Adrenal gland (tissue), 19 donors: ENCODE measurements at regions of chr19 and their contacts with region 1.

Region 1: GRCh38 chr19:49443366-49444099 is 2.2 kb upstream of the SLC17A7 start:
- DNase-seq: peak; percentile 91 to 97 (median 95)
- H3K4me3 ChIP-seq: peak overlapping the region in 3 of 4 donors; percentile 15 to 65 (median 46)
- H3K27ac ChIP-seq: peak overlapping the region in 4 of 5 donors; percentile 5 to 90 (median 48)
- H3K4me1 ChIP-seq: no peaks in the 10 kb centered on the region
- H3K27me3 ChIP-seq: peaks cover 12% of the 10 kb centered on the region
- CTCF ChIP-seq: peak; percentile 69 to 95 (median 78)
- POLR2A ChIP-seq: no peak

Region 2: DNA sequence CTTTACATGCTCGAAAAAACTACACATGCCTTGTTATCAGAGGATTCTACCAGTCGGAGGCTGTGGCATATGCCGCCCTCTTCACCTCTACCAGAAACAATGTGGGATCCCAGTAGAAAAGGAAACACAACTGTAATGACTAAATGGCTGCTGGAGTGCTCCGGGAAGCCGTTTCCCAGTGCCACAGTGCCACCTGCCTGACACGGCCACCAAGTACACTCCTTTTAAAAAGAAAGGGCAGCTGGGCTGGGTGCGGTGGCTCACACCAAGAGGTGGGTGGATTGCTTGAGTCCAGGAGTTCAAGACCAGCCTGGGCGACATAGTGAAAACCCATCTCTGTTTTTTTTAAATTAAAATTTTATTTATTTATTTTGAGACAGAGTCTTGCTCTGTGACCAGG is 218.7 kb before region 1 on chr19:
- intact Hi-C with region 1: loop called in 1 of 2 experiments (anchors 5 kb)
- DNase-seq: peak; percentile 27 to 76 (median 65)
- H3K4me3 ChIP-seq: no peak overlapping the region
- H3K27ac ChIP-seq: no peak overlapping the region
- H3K4me1 ChIP-seq: no peaks in the 10 kb centered on the region
- H3K27me3 ChIP-seq: no peaks in the 10 kb centered on the region
- CTCF ChIP-seq: peak; percentile 25 to 55 (median 42)
- POLR2A ChIP-seq: no peak

Region 3: GRCh38 chr19:49391581-49392399 is 51.7 kb before region 1 on chr19:
- intact Hi-C with region 1: loop called (anchors 2 to 5 kb)
- DNase-seq: peak; percentile 78 to 84 (median 80)
- H3K4me3 ChIP-seq: no peak overlapping the region
- H3K27ac ChIP-seq: no peak overlapping the region
- H3K4me1 ChIP-seq: no peaks in the 10 kb centered on the region
- H3K27me3 ChIP-seq: peaks cover 2% of the 10 kb centered on the region
- CTCF ChIP-seq: peak; percentile 69 to 93 (median 86)
- POLR2A ChIP-seq: no peak

Region 4: DNA sequence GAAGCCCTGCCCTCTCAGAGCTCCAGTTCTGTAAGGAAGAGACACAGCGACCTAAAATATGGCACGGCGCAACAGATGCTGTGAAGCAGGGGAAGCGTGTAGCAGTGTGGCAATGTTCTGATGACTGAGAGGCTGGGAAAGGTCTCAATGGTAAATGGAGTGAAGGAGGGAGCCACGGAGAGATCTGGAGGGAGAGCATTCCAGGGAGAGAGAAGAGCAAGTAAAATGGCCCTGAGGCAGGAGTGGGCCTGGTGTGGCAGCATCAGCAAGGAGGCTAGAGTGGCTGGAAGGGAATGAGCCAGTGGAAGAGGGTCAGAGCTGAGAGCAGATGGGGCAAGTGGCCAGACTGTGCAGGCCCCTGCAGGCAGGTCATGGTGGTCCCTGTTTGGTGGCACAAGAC is 100.6 kb after region 1 on chr19:
- intact Hi-C with region 1: no loop called
- DNase-seq: no peak
- H3K4me3 ChIP-seq: no peak overlapping the region
- H3K27ac ChIP-seq: no peak overlapping the region
- H3K4me1 ChIP-seq: no peaks in the 10 kb centered on the region
- H3K27me3 ChIP-seq: no peaks in the 10 kb centered on the region
- CTCF ChIP-seq: no peak
- POLR2A ChIP-seq: no peak